HEK293T (cell line): ENCODE measurements at regions of chr11 and their contacts with region 1.

Region 1: DNA sequence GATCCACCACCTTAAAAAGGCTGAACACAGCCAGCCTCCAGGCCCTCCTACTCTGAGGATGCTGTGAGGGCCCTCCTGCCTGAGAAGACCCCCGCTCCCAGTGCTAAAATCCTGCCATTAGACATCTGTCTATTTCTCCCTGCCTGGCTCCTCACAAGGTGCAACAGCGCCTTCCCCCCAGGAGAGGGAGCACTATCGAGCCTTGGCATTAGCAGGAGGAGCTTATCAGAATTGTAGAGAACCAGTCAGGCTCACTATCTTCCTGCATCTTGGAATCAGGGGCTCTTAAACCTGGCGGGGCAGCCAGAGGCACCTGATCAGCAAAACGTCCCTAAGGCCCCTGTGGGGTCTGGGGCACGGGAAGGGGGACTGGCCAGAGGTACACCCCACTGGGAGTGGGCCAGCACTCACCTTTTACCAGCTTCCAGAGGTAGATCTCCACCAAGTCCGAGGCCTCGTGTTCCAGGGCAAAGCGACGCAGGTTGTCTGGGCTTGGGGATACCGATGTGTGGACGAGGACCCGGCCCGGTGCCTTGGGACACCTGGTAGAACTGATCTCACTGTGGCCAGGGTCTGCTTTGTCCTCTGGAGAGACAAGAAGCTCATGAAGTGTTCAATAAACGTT is 28.7 kb downstream of the CHRDL2 start:
- DNase-seq: peak; percentile 84

Region 2: DNA sequence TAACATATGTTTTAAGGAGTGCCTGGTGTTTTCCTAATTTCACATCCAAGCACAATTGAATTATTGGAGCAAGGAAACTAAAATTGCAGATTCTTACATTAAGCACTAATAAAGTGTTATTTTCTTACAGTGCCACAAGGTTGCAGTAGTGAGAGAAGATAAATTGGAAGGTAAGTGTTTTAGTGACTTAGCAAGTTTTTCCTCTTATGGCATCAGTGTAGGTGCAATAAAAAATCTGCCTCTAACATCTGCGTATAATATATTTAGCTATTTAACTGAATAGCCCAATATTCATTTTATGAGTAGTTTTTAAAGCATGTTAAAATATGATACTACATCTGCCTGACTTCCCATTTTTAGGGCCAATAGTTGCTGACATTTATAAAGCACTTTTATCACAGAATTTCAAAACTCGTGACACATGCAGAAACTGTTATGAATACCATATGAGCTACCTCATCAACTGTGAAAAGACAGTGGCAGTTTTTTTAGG is 91.1 kb before region 1 on chr11:
- CTCF ChIA-PET with region 1: no interaction called
- POLR2A ChIA-PET with region 1: no interaction called
- DNase-seq: peak; percentile 11

Region 3: GRCh38 chr11:74739546-74740270 is 37.2 kb after region 1 on chr11:
- CTCF ChIA-PET with region 1: interaction called, 14 read pairs
- POLR2A ChIA-PET with region 1: no interaction called
- DNase-seq: peak; percentile 80